Activated CD4-positive, alpha-beta T cell treated with anti-CD3 and anti-CD28 coated beads for 36 hours (primary cell): ENCODE measurements at regions of chr20 and their contacts with region 1.

Region 1: GRCh38 chr20:38446441-38447209 is 11.5 kb upstream of the SNHG17 start:
- DNase-seq: peak; percentile 97
- ATAC-seq: peak; percentile 96
- H3K4me3 Mint-ChIP-seq: peak overlapping the region; percentile 68
- H3K27ac Mint-ChIP-seq: peak overlapping the region; percentile 63
- H3K4me1 Mint-ChIP-seq: peaks cover 29% of the 10 kb centered on the region
- H3K27me3 Mint-ChIP-seq: peaks cover 3% of the 10 kb centered on the region

Region 2: GRCh38 chr20:37294262-37294981 is 1152.2 kb before region 1 on chr20:
- CTCF ChIA-PET with region 1: no interaction called
- POLR2A ChIA-PET with region 1: no interaction called
- intact Hi-C with region 1: loop called in 1 of 2 experiments (anchors 1 kb)
- DNase-seq: no peak
- ATAC-seq: no peak
- H3K4me3 Mint-ChIP-seq: no peak overlapping the region
- H3K27ac Mint-ChIP-seq: no peak overlapping the region
- H3K4me1 Mint-ChIP-seq: peaks cover 54% of the 10 kb centered on the region
- H3K27me3 Mint-ChIP-seq: no peaks in the 10 kb centered on the region

Region 3: GRCh38 chr20:37693635-37694626 is 752.7 kb before region 1 on chr20 and contains the start of gene CTNNBL1:
- CTCF ChIA-PET with region 1: no interaction called
- POLR2A ChIA-PET with region 1: no interaction called
- intact Hi-C with region 1: loop called in 1 of 2 experiments (anchors 5 kb)
- DNase-seq: peak; percentile 99
- ATAC-seq: peak; percentile 98
- H3K4me3 Mint-ChIP-seq: peak within 1 kb of the TSS; percentile 100
- H3K27ac Mint-ChIP-seq: peak within 1 kb of the TSS; percentile 96
- H3K4me1 Mint-ChIP-seq: peaks cover 31% of the 10 kb centered on the region
- H3K27me3 Mint-ChIP-seq: peaks cover 14% of the 10 kb centered on the region
- total RNA-seq, gene CTNNBL1: 72.6 to 93.4 TPM

Region 4: GRCh38 chr20:38290832-38291581 is 155.6 kb before region 1 on chr20:
- CTCF ChIA-PET with region 1: no interaction called
- POLR2A ChIA-PET with region 1: no interaction called
- intact Hi-C with region 1: no loop called
- DNase-seq: peak; percentile 16
- ATAC-seq: no peak
- H3K4me3 Mint-ChIP-seq: no peak overlapping the region
- H3K27ac Mint-ChIP-seq: no peak overlapping the region
- H3K4me1 Mint-ChIP-seq: no peaks in the 10 kb centered on the region
- H3K27me3 Mint-ChIP-seq: peaks cover 24% of the 10 kb centered on the region

Region 5: DNA sequence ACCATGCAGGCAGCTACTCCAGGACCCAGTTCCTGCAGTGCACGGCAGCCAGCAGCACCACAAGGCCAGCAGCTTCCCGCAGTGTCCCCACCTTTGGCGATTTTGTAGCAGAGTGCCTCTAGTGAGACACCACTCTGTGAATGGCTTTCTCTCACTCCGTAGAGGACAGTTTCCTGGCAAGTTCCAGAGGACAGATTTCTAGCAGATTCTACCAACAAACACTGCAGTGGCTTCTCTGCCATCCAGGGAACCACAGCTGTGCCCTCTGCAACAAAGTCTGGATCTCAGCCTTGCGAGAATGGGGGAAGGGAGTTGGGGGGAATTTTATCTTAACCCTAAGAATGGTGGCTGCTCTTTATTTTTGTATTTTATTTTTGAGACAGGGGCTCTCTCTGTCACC is 40.1 kb before region 1 on chr20:
- CTCF ChIA-PET with region 1: no interaction called
- POLR2A ChIA-PET with region 1: no interaction called
- intact Hi-C with region 1: no loop called
- DNase-seq: no peak
- ATAC-seq: no peak
- H3K4me3 Mint-ChIP-seq: no peak overlapping the region
- H3K27ac Mint-ChIP-seq: no peak overlapping the region
- H3K4me1 Mint-ChIP-seq: no peaks in the 10 kb centered on the region
- H3K27me3 Mint-ChIP-seq: no peaks in the 10 kb centered on the region

Region 6: GRCh38 chr20:38426006-38426405 is 20.6 kb before region 1 on chr20:
- CTCF ChIA-PET with region 1: interaction called, 101 read pairs
- POLR2A ChIA-PET with region 1: interaction called, 13 read pairs
- intact Hi-C with region 1: no loop called
- DNase-seq: peak; percentile 53
- ATAC-seq: peak; percentile 85
- H3K4me3 Mint-ChIP-seq: no peak overlapping the region
- H3K27ac Mint-ChIP-seq: peak overlapping the region; percentile 14
- H3K4me1 Mint-ChIP-seq: peaks cover 51% of the 10 kb centered on the region
- H3K27me3 Mint-ChIP-seq: no peaks in the 10 kb centered on the region

Region 7: GRCh38 chr20:38434743-38435554 is 11.7 kb before region 1 on chr20 and contains the start of gene SNHG17:
- CTCF ChIA-PET with region 1: interaction called, 101 read pairs
- POLR2A ChIA-PET with region 1: interaction called, 48 read pairs
- intact Hi-C with region 1: loop called (anchors 1 kb)
- DNase-seq: peak; percentile 94
- ATAC-seq: peak; percentile 84
- H3K4me3 Mint-ChIP-seq: peak within 1 kb of the TSS; percentile 97
- H3K27ac Mint-ChIP-seq: peak within 1 kb of the TSS; percentile 98
- H3K4me1 Mint-ChIP-seq: peaks cover 39% of the 10 kb centered on the region
- H3K27me3 Mint-ChIP-seq: peaks cover 4% of the 10 kb centered on the region
- total RNA-seq, gene SNHG17: 70.7 to 72.4 TPM

Region 8: DNA sequence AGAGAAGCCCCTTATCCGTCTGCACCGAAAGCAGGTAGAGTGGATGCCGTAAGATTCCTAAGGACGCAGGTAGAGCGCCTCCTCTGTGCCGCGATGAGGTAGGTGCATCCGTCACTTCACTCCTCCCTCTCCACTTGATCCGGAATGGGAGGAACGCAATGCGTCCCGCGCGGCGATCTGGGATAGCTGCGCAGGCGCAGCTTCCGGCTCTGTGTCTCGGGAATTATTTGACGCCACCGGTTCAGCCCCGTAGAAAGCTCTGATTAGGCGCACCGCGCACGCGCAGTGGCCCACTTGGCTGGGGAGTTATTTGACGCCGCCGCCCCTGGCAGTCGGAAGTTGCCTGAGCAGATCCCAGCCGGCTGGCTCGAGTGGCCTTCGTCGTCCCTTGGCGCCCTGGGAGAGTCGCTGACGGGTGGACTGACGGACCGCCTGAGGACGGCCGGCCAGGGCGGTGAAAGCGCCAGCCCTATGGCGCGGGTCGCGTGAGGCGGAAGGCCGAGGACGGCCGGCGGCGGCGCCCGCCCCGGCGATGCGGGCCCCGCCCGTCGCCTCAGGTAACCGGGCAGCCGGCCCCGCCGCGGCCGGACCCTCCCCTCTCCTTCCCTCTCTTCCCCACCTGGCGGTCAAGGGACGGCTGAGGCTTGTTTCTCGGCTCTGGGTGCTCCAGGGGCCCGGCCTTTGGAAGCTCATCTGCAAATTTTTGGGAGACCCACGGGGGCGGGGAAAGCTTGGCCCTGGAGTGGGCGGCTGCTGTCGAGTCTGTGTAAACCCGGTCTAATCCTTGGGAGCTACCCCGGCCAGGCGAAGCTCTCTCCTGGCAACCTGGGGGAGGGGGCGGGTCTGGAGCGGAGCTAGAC is 26.1 kb after region 1 on chr20 and contains the start of gene RALGAPB:
- CTCF ChIA-PET with region 1: interaction called, 15 read pairs
- POLR2A ChIA-PET with region 1: interaction called, 9 read pairs
- intact Hi-C with region 1: loop called (anchors 1 kb)
- DNase-seq: peak; percentile 99
- ATAC-seq: peak; percentile 96
- H3K4me3 Mint-ChIP-seq: peak within 1 kb of the TSS; percentile 85
- H3K27ac Mint-ChIP-seq: peak within 1 kb of the TSS; percentile 79
- H3K4me1 Mint-ChIP-seq: peaks cover 38% of the 10 kb centered on the region
- H3K27me3 Mint-ChIP-seq: no peaks in the 10 kb centered on the region
- total RNA-seq, gene RALGAPB: 23.5 to 27.1 TPM